HCT116 (cell line): ENCODE measurements at regions of chr12 and their contacts with region 1.

Region 1: DNA sequence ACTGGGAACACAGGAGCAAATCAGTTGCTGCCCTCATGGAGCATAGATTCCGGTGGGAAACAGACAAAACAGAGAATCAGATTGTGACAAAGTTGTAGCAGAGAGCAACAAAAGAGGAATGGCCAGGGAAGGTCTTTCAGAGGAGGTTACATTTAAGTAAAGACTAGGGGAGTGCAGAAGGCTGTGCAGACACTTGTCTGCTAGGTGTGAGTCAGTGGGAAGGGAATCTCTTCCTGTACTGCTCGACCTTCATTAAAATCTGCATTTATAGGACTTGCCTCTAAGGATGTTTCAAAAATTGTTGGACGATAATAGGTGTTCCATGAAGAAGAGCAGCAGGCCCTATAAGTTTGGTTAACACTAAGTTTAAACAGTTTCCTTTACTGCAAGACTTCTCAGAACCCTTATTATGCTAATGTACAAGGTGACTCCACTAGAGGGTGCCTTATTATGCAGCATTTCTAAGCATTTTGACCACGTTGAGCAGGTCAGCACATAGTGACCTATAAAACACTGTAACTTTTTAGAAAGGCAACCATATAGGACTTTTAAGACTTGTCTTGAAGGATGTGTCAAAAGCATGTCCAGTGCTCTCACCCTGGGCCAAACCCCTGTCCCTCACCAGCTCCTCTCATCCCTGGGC is 91.8 kb upstream of the RIC8B start:
- DNase-seq: peak; percentile 16
- ATAC-seq: peak; percentile 81
- H3K4me3 ChIP-seq: no peak overlapping the region
- H3K27ac ChIP-seq: no peak overlapping the region
- H3K4me1 ChIP-seq: no peaks in the 10 kb centered on the region
- H3K27me3 ChIP-seq: no peaks in the 10 kb centered on the region
- CTCF ChIP-seq: peak; percentile 35 to 48 (median 45); a peak in 5 of 6 replicates
- POLR2A ChIP-seq: no peak
- RAD21 ChIP-seq: peak; percentile 56; the same call in 1 of the 2 replicates

Region 2: GRCh38 chr12:106841510-106842302 is 159.0 kb after region 1 on chr12:
- CTCF ChIA-PET with region 1: no interaction called
- POLR2A ChIA-PET with region 1: no interaction called
- RAD21 ChIA-PET with region 1: no interaction called
- intact Hi-C with region 1: loop called (anchors 2 kb)
- DNase-seq: peak; percentile 31
- ATAC-seq: peak; percentile 82
- H3K4me3 ChIP-seq: no peak overlapping the region
- H3K27ac ChIP-seq: no peak overlapping the region
- H3K4me1 ChIP-seq: peaks cover 7 to 12% of the 10 kb centered on the region in 2 experiments
- H3K27me3 ChIP-seq: no peaks in the 10 kb centered on the region
- CTCF ChIP-seq: peak; percentile 64 to 81 (median 69); a peak in 5 of 6 replicates
- POLR2A ChIP-seq: no peak
- RAD21 ChIP-seq: peak; percentile 81

Region 3: GRCh38 chr12:106919910-106920544 is 237.3 kb after region 1 on chr12:
- CTCF ChIA-PET with region 1: no interaction called
- POLR2A ChIA-PET with region 1: no interaction called
- RAD21 ChIA-PET with region 1: no interaction called
- intact Hi-C with region 1: loop called (anchors 2 kb)
- DNase-seq: peak; percentile 34
- ATAC-seq: peak; percentile 66
- H3K4me3 ChIP-seq: no peak overlapping the region
- H3K27ac ChIP-seq: no peak overlapping the region
- H3K4me1 ChIP-seq: no peaks in the 10 kb centered on the region
- H3K27me3 ChIP-seq: no peaks in the 10 kb centered on the region
- CTCF ChIP-seq: peak; percentile 65 to 85 (median 70); a peak in 5 of 6 replicates
- POLR2A ChIP-seq: no peak
- RAD21 ChIP-seq: peak; percentile 83